ENCODE measurements at regions of chr2 and their contacts with region 1.

Region 1: GRCh38 chr2:70328921-70329561 is 27.2 kb upstream of the FAM136A start:
- DNase-seq: peak; percentile 96
- ATAC-seq: peak; percentile 86
- H3K4me3 ChIP-seq: peak overlapping the region in 1 of 2 experiments; percentile 46; a peak in 2 of 4 replicates
- H3K27ac ChIP-seq: peak overlapping the region; percentile 74
- H3K4me1 ChIP-seq: peaks cover 29 to 38% of the 10 kb centered on the region in 2 experiments
- H3K27me3 ChIP-seq: no peaks in the 10 kb centered on the region
- CTCF ChIP-seq: no peak
- POLR2A ChIP-seq: no peak
- RAD21 ChIP-seq: peak; percentile 25

Region 2: GRCh38 chr2:70412294-70413070 is 83.4 kb after region 1 on chr2:
- CTCF ChIA-PET with region 1: no interaction called
- POLR2A ChIA-PET with region 1: no interaction called
- RAD21 ChIA-PET with region 1: no interaction called
- intact Hi-C with region 1: no loop called
- DNase-seq: no peak
- ATAC-seq: no peak
- H3K4me3 ChIP-seq: no peak overlapping the region
- H3K27ac ChIP-seq: no peak overlapping the region
- H3K4me1 ChIP-seq: peaks cover 0 to 10% of the 10 kb centered on the region in 2 experiments; a peak in 2 of 4 replicates
- H3K27me3 ChIP-seq: no peaks in the 10 kb centered on the region
- CTCF ChIP-seq: no peak
- POLR2A ChIP-seq: no peak
- RAD21 ChIP-seq: no peak

Region 3: GRCh38 chr2:70553584-70554337 is 224.7 kb after region 1 on chr2 and contains the start of gene TGFA:
- CTCF ChIA-PET with region 1: no interaction called
- POLR2A ChIA-PET with region 1: no interaction called
- RAD21 ChIA-PET with region 1: no interaction called
- intact Hi-C with region 1: loop called (anchors 5 kb)
- DNase-seq: peak; percentile 89
- ATAC-seq: peak; percentile 87
- H3K4me3 ChIP-seq: peak within 1 kb of the TSS; percentile 92 to 95
- H3K27ac ChIP-seq: peak within 1 kb of the TSS; percentile 94
- H3K4me1 ChIP-seq: peaks cover 18 to 25% of the 10 kb centered on the region in 2 experiments
- H3K27me3 ChIP-seq: no peaks in the 10 kb centered on the region
- CTCF ChIP-seq: peak; percentile 73 to 92 (median 76)
- POLR2A ChIP-seq: peak; percentile 5
- RAD21 ChIP-seq: peak; percentile 85
- total RNA-seq, gene TGFA: 50.1 TPM

Region 4: DNA sequence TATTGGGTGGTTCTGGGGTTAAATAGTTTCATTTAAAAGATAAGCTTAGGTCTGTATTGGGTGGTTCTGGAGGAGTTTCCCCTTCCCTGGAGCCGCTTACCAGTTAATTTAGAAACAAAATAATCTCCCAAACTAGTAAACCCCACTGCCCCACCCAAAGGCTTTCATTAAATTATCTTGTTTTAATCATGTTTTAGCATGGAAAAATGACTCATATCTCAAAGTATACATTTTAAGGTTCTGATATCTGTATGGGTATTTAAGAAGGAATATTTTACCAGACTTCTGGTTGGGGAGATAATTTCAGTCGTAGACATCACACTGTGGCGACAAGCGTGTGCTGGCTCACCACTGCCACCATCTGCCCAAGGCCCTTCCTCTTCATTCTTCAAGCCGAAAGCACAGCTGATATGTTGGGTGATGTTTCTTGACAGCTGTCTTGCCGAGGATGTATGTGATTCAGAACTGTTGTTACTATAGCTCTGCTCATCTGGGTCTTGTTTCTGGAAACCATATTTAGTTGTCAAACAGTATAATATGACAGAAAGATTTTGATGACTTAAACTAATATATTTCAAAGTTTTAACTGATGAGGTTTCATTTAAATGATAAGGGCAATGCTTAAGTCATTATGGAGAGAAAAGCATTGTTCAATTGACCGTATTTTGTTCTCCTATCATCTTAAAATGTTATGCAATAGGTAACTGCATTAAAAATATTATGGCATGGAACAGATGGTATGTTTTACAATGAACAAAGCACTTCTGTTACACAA is 456.3 kb after region 1 on chr2:
- CTCF ChIA-PET with region 1: no interaction called
- POLR2A ChIA-PET with region 1: no interaction called
- RAD21 ChIA-PET with region 1: no interaction called
- intact Hi-C with region 1: no loop called
- DNase-seq: peak; percentile 41
- ATAC-seq: peak; percentile 82
- H3K4me3 ChIP-seq: no peak overlapping the region
- H3K27ac ChIP-seq: no peak overlapping the region
- H3K4me1 ChIP-seq: peaks cover 0 to 10% of the 10 kb centered on the region in 2 experiments; a peak in 2 of 4 replicates
- H3K27me3 ChIP-seq: no peaks in the 10 kb centered on the region
- CTCF ChIP-seq: peak; percentile 76 to 85 (median 81)
- POLR2A ChIP-seq: no peak
- RAD21 ChIP-seq: peak; percentile 85

Measured in HCT116 (cell line).